ENCODE measurements at regions of chr7 and their contacts with region 1.

Region 1: GRCh38 chr7:28921822-28922221 is 36.3 kb downstream of the TRIL start:
- DNase-seq: no peak

Region 2: DNA sequence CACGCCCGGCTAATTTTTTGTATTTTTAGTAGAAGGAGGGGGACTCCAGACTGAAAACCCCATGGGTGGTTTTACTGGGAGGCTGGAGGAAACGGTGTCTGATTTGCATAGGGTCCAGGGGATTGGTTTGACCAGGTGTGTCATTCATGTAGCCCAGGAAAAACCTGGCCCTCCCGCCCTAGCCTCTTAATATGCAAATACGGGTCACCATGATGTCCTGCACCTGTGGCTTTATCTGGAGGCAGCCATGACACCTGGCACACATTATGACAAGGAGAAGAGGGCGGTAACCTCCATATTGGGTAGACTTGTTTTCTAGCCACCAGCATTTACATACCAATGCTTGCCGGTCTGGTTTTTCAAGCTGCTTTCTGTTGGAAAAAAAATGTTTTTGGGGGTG is 31.7 kb before region 1 on chr7:
- intact Hi-C with region 1: no loop called
- DNase-seq: no peak

Region 3: DNA sequence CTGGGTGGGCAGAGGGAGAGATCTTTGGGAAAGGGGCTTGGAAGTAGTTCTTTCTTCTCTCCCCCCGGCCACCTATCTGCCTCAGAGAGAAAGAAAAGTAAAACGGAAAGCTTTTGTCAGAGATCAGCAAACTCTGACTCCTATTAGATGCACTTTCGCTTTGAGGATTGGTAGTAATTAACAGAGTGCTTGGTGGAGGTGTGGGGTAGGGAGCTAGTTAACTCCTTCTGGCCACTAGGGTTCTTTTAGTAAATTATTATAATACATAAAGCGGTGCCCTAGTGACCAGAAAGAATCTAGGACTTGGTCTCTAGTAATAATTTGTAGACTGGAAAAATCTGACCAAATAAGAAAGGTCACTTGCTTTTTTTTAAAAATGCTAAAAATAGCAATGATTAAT is 169.9 kb after region 1 on chr7:
- intact Hi-C with region 1: no loop called
- DNase-seq: no peak

Region 4: GRCh38 chr7:29105752-29106668 is 184.2 kb after region 1 on chr7:
- intact Hi-C with region 1: loop called (anchors 2 kb)
- DNase-seq: no peak

Region 5: GRCh38 chr7:29408841-29409243 is 487.0 kb after region 1 on chr7:
- intact Hi-C with region 1: loop called (anchors 2 kb)
- DNase-seq: no peak

Measured in cardiac septum (tissue), 1 donor.